ENCODE measurements at regions of chr19 and their contacts with region 1.

Region 1: DNA sequence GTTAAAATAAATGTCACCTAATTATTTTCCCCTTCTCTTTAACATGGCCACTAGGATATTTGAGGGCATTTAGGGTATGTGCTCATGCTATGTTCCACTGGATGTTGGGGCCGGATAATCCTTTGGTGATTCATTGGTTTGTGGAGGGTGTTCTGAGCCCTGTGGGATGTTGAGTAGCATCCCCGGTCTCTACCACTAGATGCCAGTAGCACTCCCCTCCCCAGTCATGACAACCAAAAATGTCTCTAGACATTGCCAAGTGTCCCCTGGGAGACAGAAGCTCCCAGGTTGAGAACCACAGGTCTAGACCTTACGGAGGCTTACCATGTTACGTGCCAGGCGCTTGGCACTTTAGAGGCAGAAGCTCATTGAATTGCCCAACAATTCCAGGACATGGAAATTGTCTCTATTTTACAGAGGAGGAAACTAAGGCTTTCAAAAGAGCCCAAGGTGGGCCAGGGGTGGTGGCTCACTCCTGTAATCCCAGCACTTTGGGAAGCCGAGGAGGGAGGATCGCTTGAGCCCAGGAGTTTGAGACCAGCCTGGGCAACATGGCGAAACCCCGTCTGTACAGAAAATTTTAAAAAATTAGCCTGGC is 14.1 kb downstream of the SHANK1 start:
- DNase-seq: peak; percentile 56
- ATAC-seq: peak; percentile 87
- H3K4me3 ChIP-seq: no peak overlapping the region
- H3K27ac ChIP-seq: no peak overlapping the region
- H3K4me1 ChIP-seq: peaks cover 0 to 2% of the 10 kb centered on the region in 2 experiments; a peak in 2 of 4 replicates
- H3K27me3 ChIP-seq: no peaks in the 10 kb centered on the region; the same call in 1 of the 2 replicates
- CTCF ChIP-seq: peak; percentile 79 to 92 (median 85)
- POLR2A ChIP-seq: no peak
- RAD21 ChIP-seq: peak; percentile 87

Region 2: GRCh38 chr19:50777754-50778303 is 72.3 kb after region 1 on chr19:
- CTCF ChIA-PET with region 1: interaction called, 46 read pairs
- POLR2A ChIA-PET with region 1: no interaction called
- RAD21 ChIA-PET with region 1: no interaction called
- intact Hi-C with region 1: loop called (anchors 1 kb)
- DNase-seq: no peak
- ATAC-seq: peak; percentile 67
- H3K4me3 ChIP-seq: peak overlapping the region; percentile 24 to 43
- H3K27ac ChIP-seq: no peak overlapping the region
- H3K4me1 ChIP-seq: peaks cover 6 to 17% of the 10 kb centered on the region in 2 experiments; a peak in 3 of 4 replicates
- H3K27me3 ChIP-seq: peaks cover 14% of the 10 kb centered on the region; the same call in 1 of the 2 replicates
- CTCF ChIP-seq: no peak
- POLR2A ChIP-seq: no peak
- RAD21 ChIP-seq: no peak